ENCODE measurements at regions of chr5 and their contacts with region 1.

Region 1: GRCh38 chr5:170880084-170880483 is 18.3 kb downstream of the RANBP17 start:
- DNase-seq: no peak
- ATAC-seq: no peak
- H3K4me3 ChIP-seq: no peak overlapping the region
- H3K27ac ChIP-seq: no peak overlapping the region
- H3K4me1 ChIP-seq: no peaks in the 10 kb centered on the region
- H3K27me3 ChIP-seq: no peaks in the 10 kb centered on the region
- CTCF ChIP-seq: no peak

Region 2: GRCh38 chr5:170740551-170741205 is 139.4 kb before region 1 on chr5:
- intact Hi-C with region 1: no loop called
- DNase-seq: no peak
- ATAC-seq: no peak
- H3K4me3 ChIP-seq: no peak overlapping the region
- H3K27ac ChIP-seq: no peak overlapping the region
- H3K4me1 ChIP-seq: peaks cover 0 to 13% (median 8%) of the 10 kb centered on the region in 3 donors
- H3K27me3 ChIP-seq: no peaks in the 10 kb centered on the region
- CTCF ChIP-seq: no peak

Region 3: GRCh38 chr5:170832254-170832653 is 47.8 kb before region 1 on chr5:
- intact Hi-C with region 1: no loop called
- DNase-seq: no peak
- ATAC-seq: no peak
- H3K4me3 ChIP-seq: no peak overlapping the region
- H3K27ac ChIP-seq: no peak overlapping the region
- H3K4me1 ChIP-seq: no peaks in the 10 kb centered on the region
- H3K27me3 ChIP-seq: no peaks in the 10 kb centered on the region
- CTCF ChIP-seq: no peak

Region 4: GRCh38 chr5:171010816-171011215 is 130.7 kb after region 1 on chr5:
- intact Hi-C with region 1: loop called in 1 of 3 experiments (anchors 5 kb)
- DNase-seq: no peak
- ATAC-seq: no peak
- H3K4me3 ChIP-seq: no peak overlapping the region
- H3K27ac ChIP-seq: no peak overlapping the region
- H3K4me1 ChIP-seq: no peaks in the 10 kb centered on the region
- H3K27me3 ChIP-seq: no peaks in the 10 kb centered on the region
- CTCF ChIP-seq: no peak